WTC11 (cell line): ENCODE measurements at regions of chr20 and their contacts with region 1.

Region 1: DNA sequence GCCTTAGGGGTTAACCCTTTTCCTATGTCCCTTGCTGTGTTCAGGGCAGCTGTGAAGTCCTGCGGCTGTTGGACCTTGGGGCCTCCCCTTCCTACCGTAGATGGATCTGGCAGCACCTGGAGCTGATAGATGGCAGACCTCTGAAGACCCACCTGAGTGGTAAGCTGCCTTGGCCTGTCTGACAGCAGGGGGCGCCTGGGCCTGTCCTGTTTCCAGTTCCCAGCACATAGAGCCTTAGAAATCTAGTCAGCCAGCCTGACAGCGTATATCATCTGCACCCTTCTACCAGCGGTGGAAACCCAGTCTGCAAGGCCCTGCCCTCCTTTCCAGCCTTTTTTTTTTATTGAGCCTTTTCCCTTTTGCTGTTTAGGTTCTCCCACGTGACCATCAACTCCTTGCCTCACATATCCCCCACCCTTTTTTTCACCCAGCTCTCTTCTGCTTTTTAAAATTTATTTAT is 26.6 kb downstream of the CNBD2 start:
- DNase-seq: peak; percentile 94
- ATAC-seq: peak; percentile 97
- H3K4me3 Mint-ChIP-seq: no peak overlapping the region
- H3K27ac Mint-ChIP-seq: no peak overlapping the region
- H3K4me1 Mint-ChIP-seq: peaks cover 10% of the 10 kb centered on the region
- H3K27me3 Mint-ChIP-seq: no peaks in the 10 kb centered on the region
- CTCF ChIP-seq: peak; percentile 71

Region 2: GRCh38 chr20:35828434-35828833 is 166.6 kb before region 1 on chr20:
- CTCF ChIA-PET with region 1: no interaction called
- POLR2A ChIA-PET with region 1: no interaction called
- DNase-seq: no peak
- ATAC-seq: no peak
- H3K4me3 Mint-ChIP-seq: no peak overlapping the region
- H3K27ac Mint-ChIP-seq: no peak overlapping the region
- H3K4me1 Mint-ChIP-seq: no peaks in the 10 kb centered on the region
- H3K27me3 Mint-ChIP-seq: no peaks in the 10 kb centered on the region
- CTCF ChIP-seq: no peak

Region 3: GRCh38 chr20:35947489-35947888 is 47.5 kb before region 1 on chr20:
- CTCF ChIA-PET with region 1: interaction called, 103 read pairs
- POLR2A ChIA-PET with region 1: no interaction called
- DNase-seq: peak; percentile 67
- ATAC-seq: peak; percentile 96
- H3K4me3 Mint-ChIP-seq: no peak overlapping the region
- H3K27ac Mint-ChIP-seq: peak overlapping the region; percentile 89
- H3K4me1 Mint-ChIP-seq: peaks cover 5% of the 10 kb centered on the region
- H3K27me3 Mint-ChIP-seq: no peaks in the 10 kb centered on the region
- CTCF ChIP-seq: 0 out of 2 replicates have a peak, but pooled peaks have one; percentile 32

Region 4: GRCh38 chr20:35978041-35978513 is 16.9 kb before region 1 on chr20:
- CTCF ChIA-PET with region 1: interaction called, 74 read pairs
- POLR2A ChIA-PET with region 1: no interaction called
- DNase-seq: no peak
- ATAC-seq: no peak
- H3K4me3 Mint-ChIP-seq: no peak overlapping the region
- H3K27ac Mint-ChIP-seq: no peak overlapping the region
- H3K4me1 Mint-ChIP-seq: no peaks in the 10 kb centered on the region
- H3K27me3 Mint-ChIP-seq: no peaks in the 10 kb centered on the region; the same call in 1 of the 2 replicates
- CTCF ChIP-seq: no peak

Region 5: DNA sequence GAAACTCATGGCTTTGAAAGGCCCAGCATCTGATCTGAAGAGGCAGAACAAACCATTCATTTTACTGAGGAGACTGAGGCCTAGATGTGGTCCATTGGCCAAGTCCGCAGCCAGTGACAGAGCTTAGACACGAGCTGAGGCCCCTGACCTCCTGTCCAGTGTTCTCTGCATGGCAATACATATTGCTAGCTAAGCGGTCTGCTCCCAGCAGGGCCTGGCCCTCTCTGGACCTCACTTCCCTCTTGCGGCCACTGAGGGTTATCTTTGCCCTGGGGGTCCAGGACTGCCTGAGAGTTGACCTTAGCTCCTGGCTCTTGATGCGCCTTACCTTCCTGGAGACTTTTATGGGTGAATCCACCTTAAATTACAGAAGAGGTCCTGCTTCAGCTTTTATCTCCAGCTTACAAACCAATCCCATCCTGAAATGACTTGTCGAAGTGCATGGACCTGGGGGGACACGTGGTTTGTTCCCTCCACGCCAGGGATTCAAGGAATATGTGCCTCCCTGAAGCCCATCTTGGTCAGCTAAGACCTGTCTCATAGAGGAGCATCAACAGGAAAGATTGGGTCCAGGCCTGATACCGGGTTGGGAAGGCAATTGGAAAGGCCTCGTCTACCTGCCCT is 49.0 kb after region 1 on chr20:
- CTCF ChIA-PET with region 1: interaction called, 13 read pairs
- POLR2A ChIA-PET with region 1: no interaction called
- DNase-seq: no peak
- ATAC-seq: 0 out of 2 replicates have a peak, but pooled peaks have one; percentile 25
- H3K4me3 Mint-ChIP-seq: no peak overlapping the region
- H3K27ac Mint-ChIP-seq: peak overlapping the region; percentile 66
- H3K4me1 Mint-ChIP-seq: peaks cover 29% of the 10 kb centered on the region
- H3K27me3 Mint-ChIP-seq: no peaks in the 10 kb centered on the region
- CTCF ChIP-seq: no peak

Region 6: DNA sequence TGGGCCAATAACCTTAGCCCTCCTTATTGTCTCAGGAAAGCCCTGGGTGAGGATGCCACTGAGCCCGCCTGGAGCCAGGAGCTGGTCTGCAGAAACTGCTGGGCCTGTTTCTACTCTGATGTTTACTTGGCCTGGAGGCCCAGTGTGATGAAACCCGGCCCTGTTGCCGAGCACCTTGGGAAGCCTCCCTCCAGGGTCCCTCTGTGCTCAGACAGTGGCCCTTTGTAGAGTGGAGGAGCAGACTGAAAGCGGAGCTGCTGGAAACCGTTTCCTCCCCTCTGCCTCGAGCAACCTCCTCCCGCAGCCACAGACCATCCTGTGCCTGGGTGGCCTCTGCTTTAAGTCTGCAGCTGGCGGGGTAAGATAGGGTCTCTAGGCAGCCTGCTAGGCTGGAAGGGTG is 75.4 kb after region 1 on chr20:
- CTCF ChIA-PET with region 1: interaction called, 19 read pairs
- POLR2A ChIA-PET with region 1: no interaction called
- DNase-seq: peak; percentile 28
- ATAC-seq: peak; percentile 92
- H3K4me3 Mint-ChIP-seq: no peak overlapping the region
- H3K27ac Mint-ChIP-seq: no peak overlapping the region
- H3K4me1 Mint-ChIP-seq: peaks cover 12% of the 10 kb centered on the region
- H3K27me3 Mint-ChIP-seq: peaks cover 26% of the 10 kb centered on the region
- CTCF ChIP-seq: no peak

Region 7: DNA sequence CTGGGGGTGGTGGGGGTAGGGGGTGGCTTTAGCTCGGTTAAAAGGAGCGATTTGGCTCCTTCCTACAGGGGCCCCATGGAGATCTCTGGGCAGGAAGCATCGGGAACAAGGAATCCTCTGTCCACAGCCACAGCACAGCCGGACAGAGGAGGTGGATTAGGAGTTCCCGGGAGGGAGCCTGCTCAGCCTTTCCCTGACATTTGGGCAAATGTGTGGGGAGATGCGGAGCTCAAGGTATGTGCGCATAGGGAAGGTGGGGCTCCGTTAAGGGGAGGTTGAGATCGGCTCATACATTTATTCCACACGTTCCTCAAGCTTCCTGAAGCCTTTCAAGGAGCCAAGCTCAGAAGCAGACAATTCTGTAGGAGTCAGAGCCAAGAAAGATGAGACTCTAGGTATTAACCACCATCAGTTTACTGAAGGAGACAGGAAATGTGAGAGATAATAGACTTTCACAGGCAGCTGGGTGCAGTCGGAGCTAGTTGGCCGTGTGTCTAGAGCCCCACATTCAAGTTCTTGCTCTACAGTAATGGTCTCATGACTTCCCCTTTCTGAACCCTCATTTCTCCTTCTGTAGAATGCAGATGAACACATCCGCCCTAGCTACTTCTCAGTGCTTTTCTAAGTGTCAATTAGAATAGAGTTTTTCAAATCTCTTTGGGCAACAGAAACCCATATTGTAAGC is 118.7 kb after region 1 on chr20:
- CTCF ChIA-PET with region 1: interaction called, 26 read pairs
- POLR2A ChIA-PET with region 1: no interaction called
- DNase-seq: no peak
- ATAC-seq: peak; percentile 72
- H3K4me3 Mint-ChIP-seq: no peak overlapping the region
- H3K27ac Mint-ChIP-seq: no peak overlapping the region
- H3K4me1 Mint-ChIP-seq: peaks cover 41% of the 10 kb centered on the region
- H3K27me3 Mint-ChIP-seq: peaks cover 8% of the 10 kb centered on the region
- CTCF ChIP-seq: no peak

Region 8: DNA sequence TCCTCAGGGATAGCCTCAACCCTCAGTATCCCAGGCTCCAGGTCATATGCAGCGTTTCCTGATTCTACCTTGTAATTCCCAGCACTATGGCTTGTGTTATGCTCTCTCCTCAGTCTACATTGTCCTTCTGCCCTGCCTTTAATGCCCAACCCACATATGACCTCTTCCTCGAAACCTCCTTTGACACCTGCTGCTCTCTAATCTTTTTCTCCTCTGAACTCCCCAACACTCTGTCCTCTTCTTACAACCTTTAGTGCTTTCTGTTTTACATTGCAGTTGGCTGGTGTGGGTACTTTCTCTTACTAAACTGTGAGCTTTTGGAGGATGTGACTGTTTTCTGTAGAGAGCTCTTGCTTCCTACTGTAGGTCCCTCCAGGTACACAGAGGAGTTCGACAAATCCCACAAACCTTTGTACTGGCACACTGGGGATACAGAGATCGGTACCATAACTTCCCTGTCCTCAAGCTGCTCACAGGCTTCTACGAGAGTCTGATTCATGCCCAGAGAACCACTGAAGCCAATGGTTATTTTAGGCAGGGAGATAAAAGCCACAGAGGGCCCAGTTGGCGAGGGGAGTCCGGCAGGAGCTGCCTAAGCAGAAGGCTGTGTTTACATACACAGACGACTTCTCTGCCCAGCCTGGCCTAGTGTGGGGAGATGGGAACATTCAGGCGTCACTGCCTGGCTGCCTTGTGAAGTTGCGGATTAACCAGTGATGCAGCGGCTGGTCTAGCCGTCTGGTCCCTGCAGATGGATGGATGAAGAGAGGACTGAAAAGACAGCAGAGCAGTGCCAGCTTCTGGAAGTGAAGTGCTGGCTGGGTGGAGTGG is 151.1 kb after region 1 on chr20:
- CTCF ChIA-PET with region 1: interaction called, 366 read pairs
- POLR2A ChIA-PET with region 1: no interaction called
- DNase-seq: no peak
- ATAC-seq: peak; percentile 30; the same call in 1 of the 2 replicates
- H3K4me3 Mint-ChIP-seq: no peak overlapping the region
- H3K27ac Mint-ChIP-seq: no peak overlapping the region
- H3K4me1 Mint-ChIP-seq: no peaks in the 10 kb centered on the region
- H3K27me3 Mint-ChIP-seq: no peaks in the 10 kb centered on the region; the same call in 1 of the 2 replicates
- CTCF ChIP-seq: no peak